HAP-1 (cell line): ENCODE measurements at regions of chr5 and their contacts with region 1.

Region 1: GRCh38 chr5:126354012-126354857 is 69.0 kb upstream of the GRAMD2B start:
- DNase-seq: peak in 1 of 2 experiments; percentile 78
- H3K4me3 ChIP-seq: no peak overlapping the region
- H3K4me1 ChIP-seq: peaks cover 13% of the 10 kb centered on the region
- H3K27me3 ChIP-seq: no peaks in the 10 kb centered on the region; the same call in 1 of the 2 replicates

Region 2: DNA sequence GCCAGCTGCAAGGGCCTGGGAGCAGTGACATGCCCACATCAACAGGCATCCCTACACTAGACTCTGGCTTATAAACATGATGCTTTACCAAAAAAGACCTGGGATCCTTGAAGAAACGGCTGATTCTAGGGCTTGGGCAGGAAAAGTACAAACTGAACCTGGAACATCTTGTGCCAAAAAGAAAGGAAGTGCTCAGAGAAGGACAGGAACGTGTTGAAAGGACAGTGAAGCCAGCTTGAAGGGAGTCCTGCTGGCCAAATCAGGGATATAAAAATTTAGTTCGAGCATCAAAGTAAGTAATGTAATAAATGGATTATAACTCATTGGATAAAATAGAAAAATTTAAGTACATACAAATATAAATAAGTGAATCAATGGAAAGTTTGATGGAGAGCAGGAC is 182.6 kb after region 1 on chr5:
- in situ Hi-C with region 1: loop called (anchors 5 kb)
- DNase-seq: no peak
- H3K4me3 ChIP-seq: no peak overlapping the region
- H3K4me1 ChIP-seq: peaks cover 3% of the 10 kb centered on the region
- H3K27me3 ChIP-seq: no peaks in the 10 kb centered on the region

Region 3: GRCh38 chr5:126600631-126601511 is 246.6 kb after region 1 on chr5 and contains the start of gene PHAX:
- in situ Hi-C with region 1: no loop called
- DNase-seq: peak; percentile 77 to 84
- H3K4me3 ChIP-seq: peak within 1 kb of the TSS; percentile 98
- H3K4me1 ChIP-seq: peaks cover 10% of the 10 kb centered on the region
- H3K27me3 ChIP-seq: no peaks in the 10 kb centered on the region